GM12878 (cell line): ENCODE measurements at regions of chr6 and their contacts with region 1.

Region 1: GRCh38 chr6:33248925-33249731 is 22.5 kb downstream of the VPS52 start:
- DNase-seq: peak; percentile 99
- ATAC-seq: peak; percentile 95
- H3K4me3 ChIP-seq: peak overlapping the region; percentile 78
- H3K27ac ChIP-seq: peak overlapping the region; percentile 94
- H3K4me1 ChIP-seq: peaks cover 10% of the 10 kb centered on the region
- H3K27me3 ChIP-seq: no peaks in the 10 kb centered on the region
- CTCF ChIP-seq: peak in 2 of 3 experiments; percentile 7 to 28; a peak in 2 of 6 replicates
- EP300 ChIP-seq: 0 out of 4 replicates have a peak, but pooled peaks of 1 of the 2 experiments have one; percentile 23
- POLR2A ChIP-seq: peak; percentile 94
- RAD21 ChIP-seq: no peak

Region 2: GRCh38 chr6:32637219-32637880 is 611.8 kb before region 1 on chr6 and contains the start of gene HLA-DQA1:
- CTCF ChIA-PET with region 1: no interaction called
- POLR2A ChIA-PET with region 1: no interaction called
- RAD21 ChIA-PET with region 1: no interaction called
- SMC1A ChIA-PET with region 1: no interaction called
- in situ Hi-C with region 1: no loop called
- intact Hi-C with region 1: no loop called
- DNase-seq: peak; percentile 91
- ATAC-seq: peak; percentile 74
- H3K4me3 ChIP-seq: peak within 1 kb of the TSS; percentile 70
- H3K27ac ChIP-seq: peak within 1 kb of the TSS; percentile 95
- H3K4me1 ChIP-seq: peaks cover 12% of the 10 kb centered on the region
- H3K27me3 ChIP-seq: no peaks in the 10 kb centered on the region
- CTCF ChIP-seq: no peak
- EP300 ChIP-seq: no peak
- POLR2A ChIP-seq: peak; percentile 95
- RAD21 ChIP-seq: no peak
- polyA plus RNA-seq, gene HLA-DQA1: 327 to 423 TPM

Region 3: DNA sequence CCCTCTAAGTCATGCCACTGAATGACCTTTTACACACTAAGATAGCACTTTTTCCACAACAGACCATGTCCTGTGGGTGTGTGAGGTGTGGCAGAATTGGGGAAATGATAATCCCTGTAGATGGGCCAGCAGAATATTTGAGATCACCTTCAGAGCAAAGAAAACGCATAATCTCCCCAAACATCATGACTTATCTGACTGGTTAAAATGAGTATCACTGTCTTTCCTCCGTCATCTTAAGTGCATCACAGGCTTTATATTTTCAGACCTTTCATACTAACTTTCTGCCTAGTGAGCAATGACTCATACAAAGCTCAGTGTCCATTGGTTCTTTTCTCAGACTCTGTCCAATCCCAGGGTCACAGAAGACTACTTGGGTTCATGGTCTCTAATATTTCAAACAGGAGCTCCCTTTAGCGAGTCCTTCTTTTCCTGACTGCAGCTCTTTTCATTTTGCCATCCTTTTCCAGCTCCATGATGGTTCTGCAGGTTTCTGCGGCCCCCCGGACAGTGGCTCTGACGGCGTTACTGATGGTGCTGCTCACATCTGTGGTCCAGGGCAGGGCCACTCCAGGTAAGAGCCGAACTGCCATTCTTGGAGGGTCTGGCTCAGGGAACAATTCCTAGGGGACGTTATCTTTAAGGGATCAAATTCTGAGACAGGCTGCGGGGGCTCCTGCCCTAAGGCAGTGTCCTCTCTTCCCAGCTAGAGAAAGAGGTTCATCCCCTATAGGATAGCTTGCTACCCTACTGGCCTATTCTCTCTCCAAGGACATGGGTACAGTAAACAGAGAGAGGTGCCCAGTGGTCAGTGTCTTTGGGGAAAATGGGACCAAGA is 173.3 kb before region 1 on chr6 and contains the start of gene HLA-DPB1:
- CTCF ChIA-PET with region 1: interaction called, 10 read pairs
- POLR2A ChIA-PET with region 1: interaction called, 9 read pairs
- RAD21 ChIA-PET with region 1: interaction called, 16 read pairs
- SMC1A ChIA-PET with region 1: no interaction called
- in situ Hi-C with region 1: no loop called
- intact Hi-C with region 1: no loop called
- DNase-seq: peak; percentile 96
- ATAC-seq: peak; percentile 81
- H3K4me3 ChIP-seq: peak within 1 kb of the TSS; percentile 82
- H3K27ac ChIP-seq: peak within 1 kb of the TSS; percentile 99
- H3K4me1 ChIP-seq: peaks cover 22% of the 10 kb centered on the region
- H3K27me3 ChIP-seq: no peaks in the 10 kb centered on the region
- CTCF ChIP-seq: no peak
- EP300 ChIP-seq: no peak
- POLR2A ChIP-seq: peak; percentile 89
- RAD21 ChIP-seq: no peak
- polyA plus RNA-seq, gene HLA-DPB1: 101 to 177 TPM

Region 4: DNA sequence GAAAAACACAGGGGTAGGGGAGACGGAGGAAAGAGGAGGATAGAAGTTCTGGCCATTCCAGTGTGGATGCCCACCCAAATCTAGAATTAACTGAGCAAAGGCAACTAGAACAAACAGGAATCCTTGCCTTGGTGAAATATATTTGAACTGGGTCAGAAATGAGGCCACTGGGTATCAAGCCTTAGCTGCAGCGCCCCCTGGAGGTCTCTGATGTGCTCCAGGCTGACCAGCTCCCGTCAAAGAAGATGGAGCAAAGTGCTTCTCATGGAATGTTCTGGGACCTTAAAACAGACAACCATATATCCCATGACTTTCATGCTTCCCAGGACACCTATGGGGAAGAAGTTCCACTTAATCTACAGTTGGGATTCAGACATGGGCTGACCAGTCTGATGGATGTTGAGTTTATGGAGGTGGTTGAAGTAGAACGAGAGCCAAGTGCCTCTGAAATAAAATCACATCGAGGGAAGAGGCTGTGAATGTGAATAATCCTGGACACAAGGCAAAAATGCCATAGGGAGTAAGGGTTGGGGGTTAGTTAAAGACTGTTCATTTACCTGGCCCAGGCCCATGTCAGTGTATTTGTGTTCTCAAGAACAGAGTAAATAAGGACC is 122.9 kb before region 1 on chr6:
- CTCF ChIA-PET with region 1: interaction called, 53 read pairs
- POLR2A ChIA-PET with region 1: interaction called, 3 read pairs
- RAD21 ChIA-PET with region 1: interaction called, 20 read pairs
- SMC1A ChIA-PET with region 1: interaction called, 34 read pairs
- in situ Hi-C with region 1: no loop called
- intact Hi-C with region 1: loop called (anchors 1 kb)
- DNase-seq: no peak
- ATAC-seq: peak; percentile 76
- H3K4me3 ChIP-seq: no peak overlapping the region
- H3K27ac ChIP-seq: no peak overlapping the region
- H3K4me1 ChIP-seq: peaks cover 14% of the 10 kb centered on the region
- H3K27me3 ChIP-seq: no peaks in the 10 kb centered on the region
- CTCF ChIP-seq: peak; percentile 48 to 77 (median 71)
- EP300 ChIP-seq: no peak
- POLR2A ChIP-seq: no peak
- RAD21 ChIP-seq: peak; percentile 30

Region 5: GRCh38 chr6:33161354-33162331 is 87.5 kb before region 1 on chr6:
- CTCF ChIA-PET with region 1: interaction called, 42 read pairs
- POLR2A ChIA-PET with region 1: interaction called, 3 read pairs
- RAD21 ChIA-PET with region 1: interaction called, 17 read pairs
- SMC1A ChIA-PET with region 1: interaction called, 8 read pairs
- in situ Hi-C with region 1: no loop called
- intact Hi-C with region 1: loop called (anchors 1 kb)
- DNase-seq: no peak
- ATAC-seq: peak; percentile 96
- H3K4me3 ChIP-seq: peak overlapping the region; percentile 70; the same call in 1 of the 2 replicates
- H3K27ac ChIP-seq: no peak overlapping the region
- H3K4me1 ChIP-seq: peaks cover 4% of the 10 kb centered on the region
- H3K27me3 ChIP-seq: no peaks in the 10 kb centered on the region
- CTCF ChIP-seq: peak; percentile 89 to 97 (median 96); a peak in 5 of 6 replicates
- EP300 ChIP-seq: no peak
- POLR2A ChIP-seq: no peak
- RAD21 ChIP-seq: peak; percentile 64

Region 6: GRCh38 chr6:33208091-33208967 is 40.8 kb before region 1 on chr6 and contains the start of gene RING1:
- CTCF ChIA-PET with region 1: interaction called, 23 read pairs
- POLR2A ChIA-PET with region 1: interaction called, 6 read pairs
- RAD21 ChIA-PET with region 1: interaction called, 25 read pairs
- SMC1A ChIA-PET with region 1: interaction called, 8 read pairs
- in situ Hi-C with region 1: no loop called
- intact Hi-C with region 1: loop called (anchors 1 kb)
- DNase-seq: no peak
- ATAC-seq: peak; percentile 63
- H3K4me3 ChIP-seq: peak within 1 kb of the TSS; percentile 94
- H3K27ac ChIP-seq: peak within 1 kb of the TSS; percentile 96
- H3K4me1 ChIP-seq: peaks cover 25% of the 10 kb centered on the region
- H3K27me3 ChIP-seq: peaks cover 2 to 3% of the 10 kb centered on the region in 2 experiments; a peak in 2 of 4 replicates
- CTCF ChIP-seq: no peak
- EP300 ChIP-seq: no peak
- POLR2A ChIP-seq: peak; percentile 98
- RAD21 ChIP-seq: no peak
- polyA plus RNA-seq, gene RING1: 2.0 to 4.2 TPM

Region 7: GRCh38 chr6:33288921-33289748 is 40.0 kb after region 1 on chr6 and contains the starts of genes PFDN6 and WDR46:
- CTCF ChIA-PET with region 1: no interaction called
- POLR2A ChIA-PET with region 1: interaction called, 10 read pairs
- RAD21 ChIA-PET with region 1: interaction called, 5 read pairs
- SMC1A ChIA-PET with region 1: interaction called, 3 read pairs
- in situ Hi-C with region 1: no loop called
- intact Hi-C with region 1: no loop called
- DNase-seq: peak; percentile 89
- ATAC-seq: peak; percentile 99
- H3K4me3 ChIP-seq: peak within 1 kb of the TSS; percentile 78
- H3K27ac ChIP-seq: peak within 1 kb of the TSS; percentile 74
- H3K4me1 ChIP-seq: no peaks in the 10 kb centered on the region
- H3K27me3 ChIP-seq: no peaks in the 10 kb centered on the region
- CTCF ChIP-seq: no peak
- EP300 ChIP-seq: no peak
- POLR2A ChIP-seq: peak; percentile 65
- RAD21 ChIP-seq: no peak
- polyA plus RNA-seq, gene PFDN6: 3.1 to 5.7 TPM
- polyA plus RNA-seq, gene WDR46: 10.1 to 23.5 TPM